Activated T-helper 2 cell treated with anti-CD3 and anti-CD28 coated beads, Interferon-gamma antibody, Interleukin-2, Interleukin-4, amounts not matched to agents 10 μg/mL and 5 μg/mL and 100 μg/mL, durations not matched to agents 14 hours and 24 hours and 36 hours (primary cell): ENCODE measurements at regions of chrX and their contacts with region 1.

Region 1: DNA sequence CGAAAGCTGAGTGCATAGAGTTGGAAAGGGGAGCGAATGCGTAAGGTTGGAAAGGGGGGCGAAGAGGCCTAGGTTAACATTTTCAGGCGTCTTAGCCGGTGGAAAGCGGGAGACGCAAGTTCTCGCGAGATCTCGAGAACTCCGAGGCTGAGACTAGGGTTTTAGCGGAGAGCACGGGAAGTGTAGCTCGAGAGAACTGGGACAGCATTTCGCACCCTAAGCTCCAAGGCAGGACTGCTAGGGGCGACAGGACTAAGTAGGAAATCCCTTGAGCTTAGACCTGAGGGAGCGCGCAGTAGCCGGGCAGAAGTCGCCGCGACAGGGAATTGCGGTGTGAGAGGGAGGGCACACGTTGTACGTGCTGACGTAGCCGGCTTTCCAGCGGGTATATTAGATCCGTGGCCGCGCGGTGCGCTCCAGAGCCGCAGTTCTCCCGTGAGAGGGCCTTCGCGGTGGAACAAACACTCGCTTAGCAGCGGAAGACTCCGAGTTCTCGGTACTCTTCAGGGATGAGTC is at the start of gene DDX3X:
- DNase-seq: peak; percentile 81
- H3K4me3 Mint-ChIP-seq: peak within 1 kb of the TSS; percentile 97
- H3K27ac Mint-ChIP-seq: peak within 1 kb of the TSS; percentile 100
- H3K4me1 Mint-ChIP-seq: peaks cover 25% of the 10 kb centered on the region
- H3K27me3 Mint-ChIP-seq: no peaks in the 10 kb centered on the region
- total RNA-seq, gene DDX3X: 250 and 251 TPM in 2 replicates

Region 2: DNA sequence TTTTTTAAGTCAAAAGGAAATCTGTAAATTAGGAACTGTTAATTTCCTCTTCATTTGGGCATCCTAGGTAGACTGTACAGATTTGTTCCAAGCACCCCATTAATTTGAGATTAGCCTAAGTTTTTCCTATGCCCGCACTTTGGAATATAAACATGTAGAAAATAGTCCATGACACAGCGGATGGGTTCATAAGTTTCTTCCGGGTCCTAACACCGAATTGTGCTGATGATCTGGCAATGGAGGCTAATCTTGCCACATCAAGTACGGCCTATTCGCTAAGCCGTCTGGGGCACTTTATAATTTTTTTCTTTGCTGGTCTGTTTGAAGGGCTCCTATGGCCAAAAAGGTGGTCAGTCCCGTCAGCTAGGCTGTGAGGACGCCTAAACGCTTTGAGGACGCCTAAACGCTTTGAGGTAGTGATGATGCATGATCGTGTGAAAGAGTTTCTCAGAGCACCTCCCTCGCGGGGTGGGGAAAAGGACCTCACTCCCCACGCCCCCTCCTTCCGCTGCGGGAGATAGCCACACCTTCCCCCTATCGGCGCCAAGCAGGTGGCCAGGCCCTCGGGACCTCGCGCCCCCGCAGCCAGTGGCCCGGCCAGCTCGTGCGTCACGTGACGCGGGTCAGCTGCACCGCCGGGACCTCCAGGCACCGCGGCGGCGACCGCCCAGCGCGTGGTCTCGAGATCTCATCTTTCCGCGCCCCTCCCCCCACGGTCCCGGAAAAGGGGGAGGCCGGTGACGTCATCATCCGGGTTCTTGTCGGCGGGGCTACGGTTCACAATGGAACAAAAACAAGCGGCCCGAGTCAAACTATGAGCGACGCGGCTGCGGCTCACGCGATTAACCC is 249.5 kb before region 1 on chrX:
- intact Hi-C with region 1: loop called (anchors 2 kb)
- DNase-seq: peak; percentile 88
- H3K4me3 Mint-ChIP-seq: peak overlapping the region; percentile 89
- H3K27ac Mint-ChIP-seq: peak overlapping the region; percentile 99
- H3K4me1 Mint-ChIP-seq: peaks cover 18% of the 10 kb centered on the region
- H3K27me3 Mint-ChIP-seq: no peaks in the 10 kb centered on the region

Region 3: DNA sequence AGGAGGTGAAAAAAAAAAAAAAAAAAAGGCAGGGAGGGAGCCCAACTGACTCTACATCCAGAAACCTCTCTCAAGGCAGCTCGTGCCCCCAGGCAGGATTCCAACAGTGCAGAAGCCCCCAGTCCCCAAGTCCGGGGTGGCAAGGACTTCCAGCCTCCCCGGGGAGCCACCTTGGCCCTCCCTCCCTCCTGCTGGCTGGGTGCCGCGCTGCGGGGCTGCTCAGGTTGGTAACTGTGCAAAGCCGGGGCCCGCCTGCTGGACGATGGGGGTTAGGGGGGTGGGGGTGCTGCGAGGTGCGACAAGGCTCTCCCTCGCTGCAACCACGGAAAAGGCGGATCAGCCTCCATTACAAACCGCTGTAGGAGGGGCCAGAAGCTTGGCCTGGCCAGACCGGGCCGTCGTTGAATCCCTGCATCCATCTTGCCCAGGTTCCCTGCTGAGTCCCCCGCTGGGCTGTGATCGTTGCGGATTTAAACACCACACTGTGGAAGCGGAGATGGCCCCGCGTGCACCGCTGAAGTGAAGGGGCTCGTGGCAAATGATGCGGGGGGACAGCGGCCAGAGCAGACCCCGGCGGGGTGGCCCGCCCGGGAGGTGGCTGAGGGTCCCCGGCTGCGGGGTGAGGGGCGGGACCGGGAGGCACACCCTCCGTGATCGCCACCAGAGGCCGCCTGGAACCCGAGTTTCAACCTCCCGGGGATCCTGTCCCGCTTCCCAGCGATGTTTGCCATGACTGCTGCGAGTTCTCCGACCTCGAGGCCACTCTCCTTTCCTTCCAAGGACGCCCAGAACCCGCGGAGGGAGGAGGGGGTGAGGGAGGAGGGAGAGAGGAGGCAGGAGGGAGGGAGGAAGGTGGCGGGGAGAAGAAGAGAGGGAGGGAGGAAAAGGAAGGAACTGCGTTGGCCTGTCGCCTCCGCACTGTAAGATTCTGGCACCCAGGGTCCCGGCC is 57.9 kb before region 1 on chrX:
- intact Hi-C with region 1: loop called (anchors 2 kb)
- DNase-seq: peak; percentile 18
- H3K4me3 Mint-ChIP-seq: peak overlapping the region; percentile 78
- H3K27ac Mint-ChIP-seq: peak overlapping the region; percentile 82
- H3K4me1 Mint-ChIP-seq: peaks cover 4% of the 10 kb centered on the region
- H3K27me3 Mint-ChIP-seq: no peaks in the 10 kb centered on the region

Region 4: GRCh38 chrX:41384041-41384705 is 50.4 kb after region 1 on chrX:
- intact Hi-C with region 1: loop called (anchors 5 kb)
- DNase-seq: peak; percentile 20
- H3K4me3 Mint-ChIP-seq: peak overlapping the region; percentile 21
- H3K27ac Mint-ChIP-seq: peak overlapping the region; percentile 94
- H3K4me1 Mint-ChIP-seq: peaks cover 14% of the 10 kb centered on the region
- H3K27me3 Mint-ChIP-seq: no peaks in the 10 kb centered on the region

Region 5: DNA sequence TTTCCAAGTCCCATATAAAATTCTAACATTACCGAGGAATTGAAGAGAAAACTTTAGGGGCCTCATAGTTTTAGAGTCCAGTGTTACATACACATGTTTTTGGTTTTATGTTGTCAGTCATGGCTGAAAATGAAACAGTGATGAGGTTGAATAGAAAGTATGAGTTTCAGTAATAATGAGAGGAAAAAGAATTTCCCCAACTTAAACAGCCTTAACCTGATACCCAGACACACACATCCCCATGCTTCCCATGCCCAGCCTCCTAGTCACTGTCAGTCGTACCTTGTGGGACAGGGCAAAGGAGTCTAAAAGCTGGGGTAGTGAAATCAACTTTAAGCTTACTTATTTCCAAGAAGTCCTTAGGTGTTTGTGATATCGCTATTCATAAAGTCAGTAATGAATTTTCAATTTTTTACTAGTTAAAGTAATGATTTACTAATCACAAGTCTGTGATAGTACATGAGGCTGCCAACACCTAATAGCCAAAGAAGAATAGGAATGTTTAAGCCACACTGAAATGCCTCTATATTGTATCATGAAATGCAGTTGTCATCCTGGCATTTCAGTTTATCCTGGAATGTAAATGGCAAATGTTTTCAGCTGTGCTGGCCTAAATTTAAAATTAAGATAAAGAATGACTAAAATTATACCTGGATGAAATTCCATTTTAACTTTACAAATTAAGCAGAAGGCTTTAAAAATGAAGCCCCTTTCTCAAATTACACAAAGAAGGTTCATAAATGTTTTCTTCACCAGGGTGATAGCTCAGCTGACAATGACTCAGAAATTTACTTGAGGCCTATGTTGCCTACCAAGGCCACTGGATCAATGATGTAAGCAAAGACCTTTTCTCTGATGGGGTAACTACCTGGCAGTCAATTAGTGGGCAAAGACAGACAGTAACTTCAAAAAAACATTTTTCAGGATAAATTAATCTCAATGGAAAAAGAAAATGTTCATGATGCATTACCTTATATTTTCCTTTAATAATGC is 330.8 kb after region 1 on chrX:
- intact Hi-C with region 1: loop called (anchors 2 kb)
- DNase-seq: no peak
- H3K4me3 Mint-ChIP-seq: no peak overlapping the region
- H3K27ac Mint-ChIP-seq: peak overlapping the region; percentile 86
- H3K4me1 Mint-ChIP-seq: peaks cover 42% of the 10 kb centered on the region
- H3K27me3 Mint-ChIP-seq: no peaks in the 10 kb centered on the region